ENCODE measurements at regions of chr2 and their contacts with region 1.

Region 1: DNA sequence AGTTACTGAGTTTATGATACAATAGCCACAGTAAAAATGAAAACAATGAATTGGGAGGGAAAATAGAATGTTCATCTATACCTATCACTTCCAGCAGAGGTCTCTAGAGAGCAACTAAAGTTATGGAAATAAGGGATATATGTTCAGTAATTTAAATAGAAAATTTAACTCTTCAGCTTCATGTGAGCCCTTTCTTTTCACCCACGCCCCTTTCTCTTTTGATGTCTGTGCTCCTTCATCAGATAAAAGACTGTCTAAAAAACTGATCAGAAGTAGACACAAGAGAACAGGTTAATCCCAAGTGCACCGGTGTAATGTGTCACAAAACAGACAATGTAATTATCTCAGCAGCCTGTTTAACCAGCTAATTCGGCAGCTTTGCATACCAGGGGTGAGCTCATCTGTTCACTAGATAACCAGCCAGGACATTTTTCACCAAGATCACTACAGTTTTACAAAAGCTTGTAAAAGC is 238.5 kb upstream of the ERBB4 start:
- DNase-seq: no peak
- H3K4me3 ChIP-seq: no peak overlapping the region
- H3K27ac ChIP-seq: no peak overlapping the region
- H3K4me1 ChIP-seq: no peaks in the 10 kb centered on the region
- H3K27me3 ChIP-seq: no peaks in the 10 kb centered on the region
- CTCF ChIP-seq: peak in 2 of 3 experiments; percentile 43 to 59
- POLR2A ChIP-seq: no peak

Region 2: GRCh38 chr2:212797484-212798205 is 20.6 kb after region 1 on chr2:
- intact Hi-C with region 1: no loop called
- DNase-seq: no peak
- H3K4me3 ChIP-seq: no peak overlapping the region
- H3K27ac ChIP-seq: no peak overlapping the region
- H3K4me1 ChIP-seq: no peaks in the 10 kb centered on the region
- H3K27me3 ChIP-seq: no peaks in the 10 kb centered on the region
- CTCF ChIP-seq: no peak
- POLR2A ChIP-seq: no peak

Region 3: DNA sequence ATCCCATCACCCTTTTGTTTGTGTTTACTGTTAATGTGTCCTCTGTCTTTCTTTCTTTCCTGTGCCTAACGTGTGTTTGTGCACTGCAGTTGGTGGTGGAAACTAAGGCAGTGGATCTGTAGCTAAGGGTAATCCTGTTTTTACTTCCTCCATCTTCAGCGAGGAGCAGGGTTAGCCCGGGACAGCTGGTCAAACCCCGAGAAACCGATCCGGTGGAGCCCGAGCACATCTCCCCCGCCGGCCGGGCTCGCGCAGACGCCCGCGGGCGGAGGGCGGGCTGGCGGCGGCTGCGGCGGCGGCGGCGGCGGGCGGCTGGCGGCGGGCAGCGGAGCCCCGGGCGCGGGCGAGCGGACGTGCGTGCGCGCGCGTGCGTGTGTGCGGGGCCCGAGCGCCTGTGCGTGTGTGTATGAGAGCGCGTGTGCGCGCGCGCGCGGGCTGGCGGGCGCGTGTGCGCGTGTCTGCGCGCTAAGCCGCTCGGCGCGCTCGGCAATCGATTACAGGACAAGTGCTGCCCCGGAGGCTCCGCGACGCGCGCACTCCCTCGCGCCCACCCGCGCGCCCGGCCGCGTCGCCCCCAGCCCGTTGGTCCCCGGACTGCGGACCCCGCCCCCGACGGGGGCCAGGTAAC is 374.5 kb after region 1 on chr2 and contains the start of gene IKZF2:
- intact Hi-C with region 1: loop called (anchors 5 kb)
- DNase-seq: no peak
- H3K4me3 ChIP-seq: peak within 1 kb of the TSS; percentile 73 to 82
- H3K27ac ChIP-seq: peak within 1 kb of the TSS; percentile 94
- H3K4me1 ChIP-seq: peaks cover 29% of the 10 kb centered on the region
- H3K27me3 ChIP-seq: no peaks in the 10 kb centered on the region
- CTCF ChIP-seq: no peak
- POLR2A ChIP-seq: no peak
- total RNA-seq, gene IKZF2: 29.2 TPM

Region 4: DNA sequence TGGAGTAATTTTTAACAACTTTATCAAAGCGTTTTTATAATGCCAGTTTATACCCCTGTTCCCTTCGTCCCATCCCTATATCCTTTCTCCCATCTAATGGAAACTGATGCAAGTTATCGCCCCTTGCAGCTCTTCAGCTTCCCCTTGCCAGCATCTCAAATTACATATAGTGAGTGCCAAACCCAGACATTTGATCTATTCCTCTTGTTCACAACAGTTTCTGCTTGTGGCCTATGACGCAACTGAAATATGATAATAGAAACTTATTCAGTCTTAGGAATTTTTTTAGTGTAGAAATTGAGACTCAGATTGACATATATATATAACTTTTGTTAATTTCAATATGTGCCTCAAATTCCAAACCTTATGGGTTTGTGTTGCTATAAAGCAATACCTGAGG is 1071.6 kb after region 1 on chr2:
- intact Hi-C with region 1: no loop called
- DNase-seq: no peak
- H3K4me3 ChIP-seq: no peak overlapping the region
- H3K27ac ChIP-seq: no peak overlapping the region
- H3K4me1 ChIP-seq: no peaks in the 10 kb centered on the region
- H3K27me3 ChIP-seq: no peaks in the 10 kb centered on the region
- CTCF ChIP-seq: no peak
- POLR2A ChIP-seq: no peak